ENCODE measurements at regions of chr18 and their contacts with region 1.

Region 1: DNA sequence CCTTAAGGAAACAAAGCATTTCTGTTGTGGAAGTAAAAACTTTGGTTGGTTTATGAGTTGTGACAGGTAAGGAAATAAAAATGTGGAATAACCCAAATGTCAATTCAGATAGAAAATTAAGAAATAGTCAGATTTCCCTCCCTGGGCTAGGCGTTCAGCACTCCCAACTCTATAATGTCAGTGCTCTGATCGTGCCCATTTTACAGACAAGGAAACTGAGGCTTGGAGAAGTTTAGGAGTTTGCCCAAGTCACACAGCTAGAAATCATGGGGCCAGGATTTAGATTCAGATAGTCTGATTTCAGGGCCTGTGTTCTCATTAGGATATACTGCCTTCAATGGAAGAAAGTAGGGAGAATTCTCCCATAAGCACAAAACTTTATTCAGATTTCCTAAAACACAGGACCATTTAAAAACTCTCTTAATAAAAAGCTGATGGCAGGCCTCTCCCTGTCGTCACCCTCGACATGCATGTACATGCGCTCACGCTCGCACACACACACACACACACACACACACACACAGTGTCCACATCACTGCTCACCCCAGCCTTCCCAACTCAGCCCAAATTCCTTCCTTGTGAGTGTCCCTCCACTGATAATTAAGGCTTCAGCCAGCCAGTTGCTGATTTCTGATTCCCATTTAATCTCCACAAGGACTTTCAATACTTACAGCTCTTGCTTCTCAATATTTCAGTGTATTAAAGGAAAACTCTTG is 49.1 kb upstream of the SLC14A2 start:
- DNase-seq: no peak
- H3K4me3 ChIP-seq: no peak overlapping the region
- H3K27ac ChIP-seq: no peak overlapping the region
- H3K4me1 ChIP-seq: no peaks in the 10 kb centered on the region
- H3K27me3 ChIP-seq: no peaks in the 10 kb centered on the region
- CTCF ChIP-seq: no peak

Region 2: DNA sequence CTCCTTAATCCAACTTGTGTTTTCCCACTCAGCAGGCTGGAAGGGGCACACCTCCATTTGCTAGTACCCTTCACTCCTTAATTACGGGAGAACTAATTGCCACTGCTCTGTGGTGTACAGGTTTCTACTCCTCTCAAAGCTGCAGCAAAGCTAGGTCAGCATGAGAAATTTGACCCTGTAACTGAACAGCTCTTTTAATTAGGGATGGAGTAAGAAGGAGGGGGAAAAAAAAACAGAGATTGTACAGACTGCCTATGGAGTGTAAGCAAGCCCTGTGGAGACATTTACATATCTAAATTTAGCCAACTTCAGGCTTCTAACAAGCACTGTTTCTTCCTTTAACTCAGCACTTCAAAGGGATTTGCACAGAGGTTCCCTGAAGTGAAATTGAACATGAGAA is 1515.2 kb before region 1 on chr18:
- CTCF ChIA-PET with region 1: no interaction called
- POLR2A ChIA-PET with region 1: no interaction called
- intact Hi-C with region 1: loop called (anchors 10 kb)
- DNase-seq: no peak
- H3K4me3 ChIP-seq: no peak overlapping the region
- H3K27ac ChIP-seq: no peak overlapping the region
- H3K4me1 ChIP-seq: no peaks in the 10 kb centered on the region
- H3K27me3 ChIP-seq: no peaks in the 10 kb centered on the region
- CTCF ChIP-seq: no peak